Gastrocnemius medialis (tissue), 4 donors: ENCODE measurements at regions of chr2 and their contacts with region 1.

Region 1: GRCh38 chr2:99180755-99181623 is at the starts of genes MITD1 and MRPL30:
- DNase-seq: peak; percentile 87 to 89
- ATAC-seq: peak; percentile 98 to 100
- H3K4me3 ChIP-seq: peak within 1 kb of the TSS; percentile 73 to 84 (median 80)
- H3K27ac ChIP-seq: peak within 1 kb of the TSS; percentile 77 to 88 (median 80)
- H3K4me1 ChIP-seq: peaks cover 23 to 33% of the 10 kb centered on the region in 2 donors
- H3K27me3 ChIP-seq: no peaks in the 10 kb centered on the region
- CTCF ChIP-seq: no peak
- POLR2A ChIP-seq: peak; percentile 29 to 73
- total RNA-seq, gene MITD1: 12.3 to 16.8 (median 13.2) TPM
- total RNA-seq, gene MRPL30: 29.3 to 43.4 (median 35.5) TPM

Region 2: GRCh38 chr2:98608116-98608999 is 572.6 kb before region 1 on chr2 and contains the starts of genes COA5 and UNC50:
- in situ Hi-C with region 1: loop called in 1 of 4 experiments (anchors 25 kb)
- intact Hi-C with region 1: loop called (anchors 2 kb)
- DNase-seq: peak; percentile 79 to 85
- ATAC-seq: peak; percentile 90
- H3K4me3 ChIP-seq: peak within 1 kb of the TSS; percentile 70 to 90 (median 86)
- H3K27ac ChIP-seq: peak within 1 kb of the TSS; percentile 91 to 97 (median 94)
- H3K4me1 ChIP-seq: peaks cover 53 to 59% of the 10 kb centered on the region in 2 donors
- H3K27me3 ChIP-seq: no peaks in the 10 kb centered on the region
- CTCF ChIP-seq: no peak
- POLR2A ChIP-seq: peak; percentile 79 to 89
- total RNA-seq, gene COA5: 26.1 to 45.1 (median 31.0) TPM
- total RNA-seq, gene UNC50: 30.3 to 43.1 (median 30.5) TPM

Region 3: DNA sequence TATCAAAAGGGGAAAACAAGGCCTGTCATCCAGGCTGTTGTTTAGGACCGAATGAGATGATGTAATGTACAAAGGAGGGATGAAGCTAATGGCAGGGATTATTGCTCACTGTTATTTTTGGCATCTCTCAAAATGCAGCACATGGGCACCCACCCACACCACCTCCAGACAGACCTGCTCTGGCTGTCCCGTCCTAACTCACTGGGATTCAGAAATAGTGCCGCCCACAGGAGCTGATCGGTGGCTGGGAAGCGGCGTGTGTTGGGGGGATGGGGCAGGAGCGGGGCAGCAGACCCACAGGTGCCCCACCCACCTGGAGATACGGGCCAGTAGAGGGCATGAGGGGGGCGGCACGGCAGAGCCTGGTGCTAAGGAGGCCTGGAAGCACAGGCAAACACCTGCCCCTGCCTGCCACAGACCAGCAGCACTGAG is 297.2 kb before region 1 on chr2:
- in situ Hi-C with region 1: no loop called
- intact Hi-C with region 1: no loop called
- DNase-seq: no peak
- ATAC-seq: no peak
- H3K4me3 ChIP-seq: no peak overlapping the region
- H3K27ac ChIP-seq: no peak overlapping the region
- H3K4me1 ChIP-seq: no peaks in the 10 kb centered on the region
- H3K27me3 ChIP-seq: no peaks in the 10 kb centered on the region
- CTCF ChIP-seq: no peak
- POLR2A ChIP-seq: no peak

Region 4: GRCh38 chr2:99141110-99142108 is 39.6 kb before region 1 on chr2 and contains the start of gene C2orf15:
- in situ Hi-C with region 1: no loop called
- intact Hi-C with region 1: loop called (anchors 1 kb)
- DNase-seq: peak; percentile 82 to 86
- ATAC-seq: peak; percentile 96 to 97
- H3K4me3 ChIP-seq: peak within 1 kb of the TSS; percentile 80 to 98 (median 88)
- H3K27ac ChIP-seq: peak within 1 kb of the TSS; percentile 78 to 81 (median 79)
- H3K4me1 ChIP-seq: peaks cover 4 to 11% of the 10 kb centered on the region in 2 donors
- H3K27me3 ChIP-seq: no peaks in the 10 kb centered on the region
- CTCF ChIP-seq: no peak
- POLR2A ChIP-seq: peak; percentile 10 to 73
- total RNA-seq, gene C2orf15: not detected

Region 5: DNA sequence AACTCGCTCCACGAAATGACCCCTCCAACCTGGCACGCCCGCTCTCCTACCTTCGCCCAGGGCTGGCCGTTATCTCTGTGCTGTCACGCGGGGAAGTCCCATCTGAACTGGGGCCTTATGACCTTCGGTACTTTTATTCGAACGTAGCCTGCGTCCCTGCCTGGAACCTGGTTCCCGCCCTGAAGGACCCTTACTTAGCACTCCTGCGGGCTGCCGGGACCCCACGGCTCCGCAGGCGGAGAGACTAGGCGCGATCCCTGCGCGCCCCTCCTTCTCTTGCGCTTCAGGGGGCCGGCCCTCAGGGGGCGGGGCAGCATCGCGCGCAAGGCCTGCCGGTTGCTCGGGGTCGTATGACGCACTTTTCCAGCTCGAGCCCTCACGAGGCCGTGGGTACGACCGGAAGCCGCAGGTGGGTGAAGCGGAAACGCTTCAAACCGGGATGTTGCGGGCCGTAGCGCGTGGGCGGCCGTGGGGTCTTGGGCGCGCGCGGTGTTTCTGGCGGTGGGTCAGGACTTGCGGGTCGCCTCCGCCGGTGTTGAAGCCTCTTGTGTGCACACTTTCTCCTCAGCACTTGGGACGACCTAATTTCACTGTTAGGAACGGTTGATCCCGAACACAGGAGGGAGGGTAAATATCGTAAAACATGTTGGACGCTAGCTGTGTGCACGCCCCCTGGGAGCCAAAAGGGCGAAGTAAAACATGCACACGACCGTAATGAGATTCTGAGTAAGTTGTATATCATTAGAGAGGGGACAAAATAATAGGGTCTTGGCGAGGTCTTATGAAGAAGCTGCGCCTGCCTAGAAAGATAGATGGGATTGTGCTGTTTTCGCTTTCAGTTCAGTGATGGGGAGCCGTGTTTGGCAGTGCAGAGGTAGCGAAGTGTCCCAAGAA is 26.1 kb before region 1 on chr2 and contains the starts of genes LIPT1 and TSGA10:
- in situ Hi-C with region 1: no loop called
- intact Hi-C with region 1: loop called (anchors 1 kb)
- DNase-seq: peak; percentile 90 to 93
- ATAC-seq: peak; percentile 96 to 98
- H3K4me3 ChIP-seq: peak within 1 kb of the TSS; percentile 61 to 92 (median 86)
- H3K27ac ChIP-seq: peak within 1 kb of the TSS; percentile 86 to 99 (median 94)
- H3K4me1 ChIP-seq: peaks cover 20 to 36% of the 10 kb centered on the region in 2 donors
- H3K27me3 ChIP-seq: no peaks in the 10 kb centered on the region
- CTCF ChIP-seq: peak in 3 of 5 experiments; percentile 13 to 26 (median 13)
- POLR2A ChIP-seq: peak; percentile 89 to 93
- total RNA-seq, gene LIPT1: 4.2 to 7.5 (median 6.2) TPM
- total RNA-seq, gene TSGA10: 0.40 to 5.8 (median 1.5) TPM

Region 6: DNA sequence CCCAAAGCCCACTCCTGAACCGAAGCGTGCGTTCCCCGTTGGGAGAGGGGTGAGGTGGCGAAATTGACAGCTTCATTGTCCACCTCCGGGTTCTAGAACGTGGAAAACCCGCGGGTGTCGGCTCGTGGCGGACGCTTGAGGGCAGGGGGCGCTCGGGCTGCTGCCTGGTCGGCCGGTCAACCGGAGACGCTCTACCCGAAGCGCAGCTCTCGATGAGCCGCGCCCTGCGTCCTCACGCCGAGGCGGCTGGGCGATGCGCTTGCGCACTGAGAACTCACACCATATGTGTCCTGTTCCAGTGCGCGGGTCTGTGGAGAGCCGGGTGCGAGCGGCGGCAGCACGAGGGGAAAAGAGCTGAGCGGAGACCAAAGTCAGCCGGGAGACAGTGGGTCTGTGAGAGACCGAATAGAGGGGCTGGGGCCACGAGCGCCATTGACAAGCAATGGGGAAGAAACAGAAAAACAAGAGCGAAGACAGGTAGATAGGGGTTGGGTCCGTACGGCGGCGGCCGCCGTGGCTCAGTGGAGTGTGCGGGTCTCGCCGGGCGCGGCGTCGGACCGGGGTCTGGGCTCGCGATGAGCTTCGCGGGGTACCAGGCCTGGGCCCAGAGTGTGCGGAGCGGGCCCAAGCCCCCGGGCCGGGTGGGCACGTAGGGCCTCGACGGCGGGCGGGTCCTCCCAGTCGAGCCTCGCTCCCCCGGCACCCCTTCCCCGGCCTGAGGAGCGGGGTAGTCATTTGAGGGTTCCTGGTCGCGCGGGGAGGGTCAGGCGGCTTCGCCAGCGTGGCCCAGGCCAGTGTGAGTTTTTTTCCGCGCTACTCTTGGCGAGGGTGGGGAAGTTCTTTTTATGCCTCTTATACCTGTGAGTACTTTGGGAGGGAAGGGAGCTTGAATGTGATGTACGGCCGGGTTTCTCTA is 156.4 kb after region 1 on chr2 and contains the start of gene EIF5B:
- in situ Hi-C with region 1: loop called (anchors 10 to 25 kb)
- intact Hi-C with region 1: loop called (anchors 1 kb)
- DNase-seq: peak; percentile 95 to 96
- ATAC-seq: peak; percentile 77 to 81
- H3K4me3 ChIP-seq: peak within 1 kb of the TSS; percentile 87 to 98 (median 92)
- H3K27ac ChIP-seq: peak within 1 kb of the TSS; percentile 94 to 98 (median 97)
- H3K4me1 ChIP-seq: peaks cover 35 to 38% of the 10 kb centered on the region in 2 donors
- H3K27me3 ChIP-seq: no peaks in the 10 kb centered on the region
- CTCF ChIP-seq: peak in 4 of 5 experiments; percentile 38 to 69 (median 54)
- POLR2A ChIP-seq: peak; percentile 82 to 85
- total RNA-seq, gene EIF5B: 33.0 to 71.3 (median 50.7) TPM

Region 7: GRCh38 chr2:99348173-99348572 is 167.2 kb after region 1 on chr2:
- in situ Hi-C with region 1: loop called (anchors 10 to 25 kb)
- intact Hi-C with region 1: no loop called
- DNase-seq: no peak
- ATAC-seq: no peak
- H3K4me3 ChIP-seq: no peak overlapping the region
- H3K27ac ChIP-seq: no peak overlapping the region
- H3K4me1 ChIP-seq: peaks cover 0 to 8% of the 10 kb centered on the region in 2 donors
- H3K27me3 ChIP-seq: no peaks in the 10 kb centered on the region
- CTCF ChIP-seq: no peak
- POLR2A ChIP-seq: no peak

Region 8: DNA sequence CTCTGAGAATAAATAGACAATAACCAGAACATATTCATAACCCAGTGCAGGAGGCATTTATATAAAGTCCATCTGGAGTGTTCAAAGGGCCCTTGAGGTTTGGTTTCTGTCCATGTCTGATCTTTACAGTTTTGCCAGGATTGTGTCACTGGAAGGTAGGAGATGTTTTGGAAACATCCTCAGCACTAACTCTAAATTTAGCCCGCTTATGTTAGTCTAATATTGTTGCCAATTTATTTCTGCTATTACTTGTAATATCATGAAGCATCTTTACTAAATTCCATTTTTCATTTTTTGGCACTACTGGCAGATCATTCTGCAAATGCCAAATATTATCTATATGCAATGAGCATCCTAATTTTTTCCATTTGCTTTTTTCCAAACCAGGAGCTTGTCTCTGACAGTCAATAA is 331.2 kb after region 1 on chr2:
- in situ Hi-C with region 1: no loop called
- intact Hi-C with region 1: no loop called
- DNase-seq: no peak
- ATAC-seq: no peak
- H3K4me3 ChIP-seq: no peak overlapping the region
- H3K27ac ChIP-seq: no peak overlapping the region
- H3K4me1 ChIP-seq: peaks cover 6 to 9% of the 10 kb centered on the region in 2 donors
- H3K27me3 ChIP-seq: no peaks in the 10 kb centered on the region
- CTCF ChIP-seq: no peak
- POLR2A ChIP-seq: no peak

Region 9: DNA sequence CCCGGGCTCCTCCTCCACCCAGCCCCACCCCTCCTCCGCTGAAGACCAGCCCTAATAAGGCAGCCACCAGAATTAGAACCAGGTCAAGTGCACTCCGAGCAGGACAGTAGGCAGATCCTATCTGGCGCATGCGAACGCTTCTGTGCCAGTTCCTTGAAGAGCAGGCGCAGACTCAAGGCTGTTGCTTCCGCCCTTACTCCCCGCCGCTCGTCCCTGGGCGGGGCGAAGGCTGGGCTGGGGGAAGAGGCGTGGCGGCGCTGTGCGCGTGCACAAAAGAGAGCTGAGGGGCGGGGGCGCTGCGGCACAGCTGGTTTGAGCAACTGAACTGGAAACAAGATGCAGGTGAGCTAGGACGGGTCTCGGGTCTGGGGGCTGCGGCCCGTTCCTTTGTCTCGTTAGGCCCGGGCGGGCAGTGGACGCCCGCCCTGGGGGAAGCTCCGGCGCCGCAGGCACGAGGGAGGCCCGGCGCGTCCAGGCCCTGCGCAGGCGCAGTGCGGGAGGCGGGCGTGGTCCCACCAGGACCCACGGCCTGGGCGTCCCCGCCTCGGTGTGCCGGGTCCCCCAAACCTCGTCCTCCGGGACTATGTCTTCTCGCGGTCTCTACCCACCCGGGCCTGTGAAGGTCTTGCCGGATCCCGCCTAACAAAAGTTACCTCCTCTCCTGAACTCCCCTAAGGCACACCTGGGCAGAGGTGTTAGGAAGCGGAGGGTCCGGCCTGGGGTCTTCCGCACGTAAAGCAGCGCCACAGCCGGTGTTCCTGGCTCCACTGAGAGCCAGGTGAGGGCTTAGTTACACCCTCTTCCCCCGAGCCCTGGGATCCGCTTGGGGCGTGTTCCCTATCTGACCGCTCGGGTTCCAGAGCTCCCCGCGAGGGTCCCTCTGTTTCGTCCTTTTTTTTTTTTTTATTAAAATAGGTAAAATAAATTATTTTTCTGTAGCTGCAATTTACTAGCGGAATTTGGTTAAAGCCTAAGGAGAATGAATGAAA is 1382.0 kb after region 1 on chr2 and contains the start of gene PDCL3:
- in situ Hi-C with region 1: loop called in 1 of 4 experiments (anchors 25 kb)
- intact Hi-C with region 1: no loop called
- DNase-seq: peak; percentile 98
- ATAC-seq: peak; percentile 97 to 98
- H3K4me3 ChIP-seq: peak within 1 kb of the TSS; percentile 66 to 94 (median 80)
- H3K27ac ChIP-seq: peak within 1 kb of the TSS; percentile 94 to 97 (median 95)
- H3K4me1 ChIP-seq: peaks cover 0 to 24% of the 10 kb centered on the region in 2 donors
- H3K27me3 ChIP-seq: no peaks in the 10 kb centered on the region
- CTCF ChIP-seq: peak in 3 of 5 experiments; percentile 13 to 34 (median 16)
- POLR2A ChIP-seq: peak; percentile 62 to 83
- total RNA-seq, gene PDCL3: 16.6 to 37.3 (median 27.8) TPM